HepG2 (cell line): ENCODE measurements at regions of chr7 and their contacts with region 1.

Region 1: GRCh38 chr7:150404805-150405583 is 25.9 kb downstream of the ZNF775 start:
- DNase-seq: peak; percentile 75
- ATAC-seq: peak; percentile 72
- H3K4me3 ChIP-seq: peak overlapping the region; percentile 75 to 81 (median 79)
- H3K27ac ChIP-seq: peak overlapping the region; percentile 69
- H3K4me1 ChIP-seq: peaks cover 65% of the 10 kb centered on the region
- H3K27me3 ChIP-seq: no peaks in the 10 kb centered on the region
- CTCF ChIP-seq: peak; percentile 55
- EP300 ChIP-seq: peak; percentile 19 to 26; a peak in 1 of 4 replicates
- POLR2A ChIP-seq: peak; percentile 65 to 69
- RAD21 ChIP-seq: peak; percentile 55

Region 2: GRCh38 chr7:150340024-150340749 is 64.8 kb before region 1 on chr7:
- CTCF ChIA-PET with region 1: no interaction called
- POLR2A ChIA-PET with region 1: interaction called, 5 read pairs
- in situ Hi-C with region 1: loop called (anchors 5 kb)
- intact Hi-C with region 1: no loop called
- DNase-seq: peak; percentile 56
- ATAC-seq: peak; percentile 71
- H3K4me3 ChIP-seq: peak overlapping the region; percentile 75 to 88 (median 86)
- H3K27ac ChIP-seq: peak overlapping the region; percentile 49
- H3K4me1 ChIP-seq: peaks cover 41% of the 10 kb centered on the region
- H3K27me3 ChIP-seq: no peaks in the 10 kb centered on the region; a peak in 1 of 5 replicates
- CTCF ChIP-seq: peak; percentile 17; the same call in 1 of the 2 replicates
- EP300 ChIP-seq: no peak
- POLR2A ChIP-seq: 0 out of 4 replicates have a peak, but pooled peaks of 1 of the 2 experiments have one; percentile 33
- RAD21 ChIP-seq: no peak; the same call in 1 of the 2 replicates

Region 3: GRCh38 chr7:150378853-150379440 is 26.0 kb before region 1 on chr7 and contains the start of gene ZNF775:
- CTCF ChIA-PET with region 1: no interaction called
- POLR2A ChIA-PET with region 1: interaction called, 181 read pairs
- in situ Hi-C with region 1: no loop called
- intact Hi-C with region 1: no loop called
- DNase-seq: peak; percentile 90
- ATAC-seq: peak; percentile 83
- H3K4me3 ChIP-seq: peak within 1 kb of the TSS; percentile 88 to 92 (median 92)
- H3K27ac ChIP-seq: peak within 1 kb of the TSS; percentile 97
- H3K4me1 ChIP-seq: peaks cover 84% of the 10 kb centered on the region
- H3K27me3 ChIP-seq: no peaks in the 10 kb centered on the region
- CTCF ChIP-seq: peak; percentile 20
- EP300 ChIP-seq: no peak
- POLR2A ChIP-seq: peak; percentile 85 to 93
- RAD21 ChIP-seq: peak; percentile 45
- total RNA-seq, gene ZNF775: 3.1 and 4.5 TPM in 2 replicates

Region 4: GRCh38 chr7:150415161-150416153 is 10.5 kb after region 1 on chr7:
- CTCF ChIA-PET with region 1: no interaction called
- POLR2A ChIA-PET with region 1: interaction called, 47 read pairs
- in situ Hi-C with region 1: no loop called
- intact Hi-C with region 1: loop called (anchors 2 kb)
- DNase-seq: peak; percentile 89
- ATAC-seq: peak; percentile 82
- H3K4me3 ChIP-seq: peak overlapping the region in 1 of 3 experiments; percentile 1; a peak in 1 of 6 replicates
- H3K27ac ChIP-seq: no peak overlapping the region
- H3K4me1 ChIP-seq: peaks cover 42% of the 10 kb centered on the region
- H3K27me3 ChIP-seq: no peaks in the 10 kb centered on the region
- CTCF ChIP-seq: no peak
- EP300 ChIP-seq: peak; percentile 64 to 87
- POLR2A ChIP-seq: no peak
- RAD21 ChIP-seq: no peak; the same call in 1 of the 2 replicates